ENCODE measurements at regions of chr7 and their contacts with region 1.

Region 1: DNA sequence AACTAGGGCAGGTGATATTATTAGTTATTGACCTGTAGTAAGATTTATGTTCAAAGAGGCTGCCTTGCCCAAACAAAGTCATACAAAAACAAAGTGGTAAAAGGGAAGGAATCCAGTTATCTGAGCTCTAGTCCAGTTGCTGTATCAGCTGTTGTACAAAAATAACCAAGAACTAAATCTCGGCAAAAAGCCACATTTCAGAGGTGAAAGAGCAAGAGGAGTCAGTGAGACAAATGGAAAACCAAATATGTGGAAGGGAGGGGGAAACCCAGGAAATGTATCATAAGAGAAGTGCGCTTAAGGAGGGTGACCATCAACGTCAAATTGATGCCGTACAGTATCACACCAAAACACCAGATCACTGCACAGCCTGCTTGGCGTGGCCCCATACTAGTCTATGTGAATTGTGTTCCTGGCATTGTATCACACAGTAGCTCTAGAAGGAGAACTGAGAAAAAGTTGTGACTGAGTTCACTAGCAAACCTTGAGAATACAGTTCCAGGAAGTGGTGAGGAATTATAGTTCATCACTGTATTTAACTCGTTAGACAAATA is 6.4 kb downstream of the AGBL3 start:
- DNase-seq: no peak
- ATAC-seq: peak; percentile 32

Region 2: GRCh38 chr7:135147899-135148721 is 155.4 kb after region 1 on chr7 and contains the start of gene TMEM140:
- intact Hi-C with region 1: loop called (anchors 10 kb)
- DNase-seq: peak; percentile 42
- ATAC-seq: peak; percentile 85
- total RNA-seq, gene TMEM140: 16.5 TPM